ENCODE measurements at regions of chr13 and their contacts with region 1.

Region 1: DNA sequence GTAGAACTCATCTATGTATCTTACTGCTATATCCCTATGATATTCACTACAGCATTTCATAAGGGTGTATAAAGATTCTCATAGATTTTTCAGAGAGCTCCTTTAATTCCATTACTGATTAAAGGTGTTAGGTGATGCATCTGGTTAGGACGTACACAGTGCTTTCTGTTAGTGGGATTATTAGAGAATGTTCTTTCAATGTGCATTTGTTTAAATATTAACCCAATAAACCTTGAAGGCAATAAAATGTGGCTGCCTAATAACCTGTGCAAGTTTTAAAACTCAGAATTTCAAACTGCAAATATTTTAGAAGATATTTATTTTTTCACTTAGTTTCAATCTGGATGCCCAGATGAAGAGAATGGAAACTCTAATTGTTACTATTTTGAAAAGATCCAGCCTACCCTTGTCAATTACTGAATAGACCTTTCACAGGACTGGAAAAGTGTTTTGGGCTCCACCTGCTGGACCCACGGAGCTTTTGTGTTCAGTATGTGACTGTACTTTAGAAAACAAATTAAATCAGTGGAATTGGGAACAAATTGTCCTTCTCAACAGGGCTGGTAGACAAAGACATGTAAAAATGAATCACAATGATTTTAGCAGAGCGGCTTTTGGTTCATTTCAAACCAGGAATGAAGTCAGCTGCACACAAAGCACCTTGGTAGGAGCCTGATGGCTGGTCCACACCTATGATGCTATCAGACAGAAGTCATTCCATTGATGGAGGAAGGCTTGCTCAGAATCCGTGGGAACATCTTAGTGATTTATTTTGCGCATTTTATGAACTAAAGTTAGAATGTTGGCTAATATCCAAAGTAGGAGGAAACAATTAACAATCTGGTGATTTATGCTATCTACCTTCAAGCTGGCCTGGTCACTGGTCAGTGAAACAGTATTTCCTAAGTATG is 89.4 kb upstream of the RAP2A start:
- DNase-seq: peak; percentile 63
- H3K4me3 ChIP-seq: no peak overlapping the region
- H3K27ac ChIP-seq: peak overlapping the region; percentile 2 to 68 (median 46)
- H3K4me1 ChIP-seq: peaks cover 0 to 40% (median 28%) of the 10 kb centered on the region in 4 donors
- H3K27me3 ChIP-seq: no peaks in the 10 kb centered on the region
- CTCF ChIP-seq: peak; percentile 56 to 78 (median 67)
- EP300 ChIP-seq: no peak
- POLR2A ChIP-seq: no peak

Region 2: GRCh38 chr13:97109841-97110492 is 234.6 kb before region 1 on chr13:
- in situ Hi-C with region 1: loop called in 2 of 4 experiments (anchors 5 to 10 kb)
- intact Hi-C with region 1: loop called (anchors 2 kb)
- DNase-seq: peak; percentile 92
- H3K4me3 ChIP-seq: peak overlapping the region in 1 of 4 donors; percentile 8
- H3K27ac ChIP-seq: peak overlapping the region; percentile 39 to 84 (median 80)
- H3K4me1 ChIP-seq: peaks cover 11 to 38% (median 26%) of the 10 kb centered on the region in 4 donors
- H3K27me3 ChIP-seq: no peaks in the 10 kb centered on the region
- CTCF ChIP-seq: peak; percentile 93 to 97 (median 96)
- EP300 ChIP-seq: no peak
- POLR2A ChIP-seq: no peak

Region 3: DNA sequence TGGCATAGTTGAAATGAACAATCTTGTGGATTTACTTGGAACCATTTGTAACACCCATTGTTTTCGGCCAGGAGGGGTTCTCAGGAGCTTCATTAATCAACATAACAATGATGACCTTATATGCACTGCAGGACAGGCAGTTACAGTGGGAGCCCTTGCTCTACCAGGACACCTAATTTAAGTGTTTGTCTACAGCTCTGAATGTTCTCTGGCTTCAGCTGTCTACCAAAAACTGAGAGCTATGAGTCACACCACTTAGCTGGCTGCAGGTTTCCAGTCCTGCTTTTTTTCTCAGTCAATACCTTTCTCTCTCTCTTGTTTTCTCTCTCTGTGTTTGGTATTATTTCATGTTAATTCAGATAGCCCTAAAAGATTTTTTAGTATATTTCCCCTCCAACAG is 227.8 kb before region 1 on chr13:
- in situ Hi-C with region 1: loop called in 3 of 4 experiments (anchors 5 to 10 kb)
- intact Hi-C with region 1: loop called (anchors 5 kb)
- DNase-seq: no peak
- H3K4me3 ChIP-seq: no peak overlapping the region
- H3K27ac ChIP-seq: peak overlapping the region in 3 of 4 donors; percentile 78 to 84 (median 81)
- H3K4me1 ChIP-seq: peaks cover 18 to 45% (median 23%) of the 10 kb centered on the region in 4 donors
- H3K27me3 ChIP-seq: no peaks in the 10 kb centered on the region
- CTCF ChIP-seq: no peak
- EP300 ChIP-seq: peak; percentile 40
- POLR2A ChIP-seq: no peak

Region 4: DNA sequence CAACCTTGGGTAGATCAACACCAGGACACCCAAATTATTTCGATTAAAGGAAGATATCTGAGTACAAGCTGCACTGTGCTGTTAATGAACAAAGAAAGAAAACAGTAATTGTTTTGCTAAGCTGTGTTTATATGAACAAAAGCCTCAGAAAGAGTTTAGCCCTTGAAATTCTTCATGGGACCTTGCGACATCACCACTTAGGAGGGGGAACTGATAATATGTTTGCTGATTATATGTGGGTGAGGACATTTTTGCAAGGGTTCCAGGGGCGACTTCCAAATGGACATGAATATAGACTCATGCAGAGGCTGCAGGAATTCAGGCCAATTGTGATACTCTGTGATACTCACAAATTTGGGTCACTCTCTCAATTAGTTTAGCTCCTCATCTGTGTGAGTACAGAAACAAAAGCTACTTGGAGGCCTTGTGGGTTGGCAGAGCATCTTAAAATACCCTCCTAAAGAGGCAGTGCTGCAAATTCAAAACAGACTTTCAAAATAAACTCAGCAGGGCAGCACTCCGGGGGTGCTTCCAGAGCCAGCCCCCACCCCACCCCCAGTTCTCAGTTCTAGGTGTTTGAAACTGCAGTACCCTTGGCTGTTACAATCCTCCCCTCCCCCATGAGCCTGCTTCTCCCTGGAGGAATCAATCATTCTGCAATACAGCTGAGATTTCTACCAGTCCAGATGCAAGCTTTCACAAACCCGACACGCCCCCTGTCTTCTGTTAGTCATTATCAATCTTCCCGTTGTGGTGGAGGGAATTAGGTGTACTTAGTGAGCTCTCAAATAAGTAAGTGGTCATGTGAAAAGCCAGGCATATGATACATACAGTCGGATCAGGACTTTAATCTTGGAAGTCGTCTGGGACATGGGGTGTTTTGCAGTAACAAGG is 219.4 kb before region 1 on chr13:
- in situ Hi-C with region 1: loop called in 1 of 4 experiments (anchors 10 kb)
- intact Hi-C with region 1: no loop called
- DNase-seq: no peak
- H3K4me3 ChIP-seq: no peak overlapping the region
- H3K27ac ChIP-seq: peak overlapping the region; percentile 32 to 63 (median 38)
- H3K4me1 ChIP-seq: peaks cover 0 to 28% (median 11%) of the 10 kb centered on the region in 4 donors
- H3K27me3 ChIP-seq: no peaks in the 10 kb centered on the region
- CTCF ChIP-seq: no peak
- EP300 ChIP-seq: no peak
- POLR2A ChIP-seq: no peak

Region 5: GRCh38 chr13:97212601-97213040 is 131.9 kb before region 1 on chr13:
- in situ Hi-C with region 1: loop called in 1 of 4 experiments (anchors 10 kb)
- intact Hi-C with region 1: loop called (anchors 5 kb)
- DNase-seq: peak; percentile 36
- H3K4me3 ChIP-seq: no peak overlapping the region
- H3K27ac ChIP-seq: no peak overlapping the region
- H3K4me1 ChIP-seq: no peaks in the 10 kb centered on the region
- H3K27me3 ChIP-seq: no peaks in the 10 kb centered on the region
- CTCF ChIP-seq: peak; percentile 43 to 57 (median 49)
- EP300 ChIP-seq: no peak
- POLR2A ChIP-seq: no peak

Region 6: DNA sequence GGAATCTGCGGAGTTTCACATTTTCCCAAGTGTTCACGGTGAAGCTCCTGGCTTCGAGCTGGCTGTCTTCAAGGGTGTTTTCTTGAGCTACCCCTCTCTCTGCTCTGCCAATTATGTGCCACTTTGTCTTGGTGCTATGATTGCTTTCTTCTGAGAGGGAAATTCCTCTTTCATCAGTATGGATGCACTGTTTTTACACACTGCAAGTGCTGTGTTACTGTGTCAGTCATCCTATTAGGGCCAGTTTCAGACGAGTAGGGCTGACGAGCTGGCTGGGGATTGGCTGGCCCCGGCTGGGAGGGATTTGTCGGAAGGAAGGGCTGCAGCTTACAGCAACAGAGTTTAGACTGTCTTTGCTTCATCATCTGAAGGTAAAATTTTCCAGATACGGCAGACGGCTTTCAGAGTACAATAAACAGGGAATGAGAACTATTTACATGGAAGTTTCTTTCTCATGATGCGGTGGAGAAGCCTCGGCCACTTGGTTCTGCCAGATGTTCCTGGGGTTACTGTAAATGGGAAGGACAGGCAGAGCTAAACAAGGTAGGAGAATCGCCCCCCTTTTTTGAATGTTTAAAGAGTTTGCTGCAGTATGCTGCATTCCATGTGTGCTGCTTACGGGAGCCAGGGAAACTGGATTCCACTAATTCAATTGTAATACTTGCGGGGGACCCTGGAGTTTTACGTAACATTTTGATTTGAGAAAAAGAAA is 122.4 kb before region 1 on chr13 and contains the start of gene MBNL2:
- in situ Hi-C with region 1: loop called in 2 of 4 experiments (anchors 10 kb)
- intact Hi-C with region 1: loop called (anchors 5 kb)
- DNase-seq: peak; percentile 94
- H3K4me3 ChIP-seq: peak within 1 kb of the TSS; percentile 33 to 79 (median 44)
- H3K27ac ChIP-seq: peak within 1 kb of the TSS; percentile 90 to 96 (median 90)
- H3K4me1 ChIP-seq: peaks cover 10 to 41% (median 37%) of the 10 kb centered on the region in 4 donors
- H3K27me3 ChIP-seq: no peaks in the 10 kb centered on the region
- CTCF ChIP-seq: no peak
- EP300 ChIP-seq: peak; percentile 75
- POLR2A ChIP-seq: peak; percentile 90
- total RNA-seq, gene MBNL2: 26.9 to 53.7 (median 46.1) TPM

Region 7: DNA sequence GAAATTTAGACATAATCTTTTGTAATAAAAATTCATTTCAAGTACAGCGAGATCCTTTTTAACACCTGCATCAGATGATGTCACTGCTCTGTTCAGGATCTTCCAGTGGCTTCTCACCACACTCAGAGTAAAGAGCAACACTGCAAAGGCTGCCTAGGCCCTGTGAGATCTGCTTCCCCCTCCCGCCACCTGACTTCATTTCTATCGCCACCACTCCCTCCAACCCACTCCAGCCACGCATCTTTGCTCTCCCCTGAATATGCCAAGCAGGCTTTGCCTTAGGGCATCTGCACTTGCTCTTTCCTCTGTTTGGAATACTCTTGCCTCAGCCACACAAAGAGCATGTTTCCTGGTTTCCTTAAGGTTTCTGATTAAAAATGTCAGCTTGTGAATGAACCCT is 64.0 kb before region 1 on chr13:
- in situ Hi-C with region 1: loop called in 1 of 4 experiments (anchors 10 kb)
- intact Hi-C with region 1: loop called (anchors 10 kb)
- DNase-seq: no peak
- H3K4me3 ChIP-seq: no peak overlapping the region
- H3K27ac ChIP-seq: peak overlapping the region; percentile 64 to 79 (median 74)
- H3K4me1 ChIP-seq: peaks cover 20 to 72% (median 40%) of the 10 kb centered on the region in 4 donors
- H3K27me3 ChIP-seq: no peaks in the 10 kb centered on the region
- CTCF ChIP-seq: no peak
- EP300 ChIP-seq: no peak
- POLR2A ChIP-seq: no peak